ENCODE measurements at regions of chr12 and their contacts with region 1.

Region 1: DNA sequence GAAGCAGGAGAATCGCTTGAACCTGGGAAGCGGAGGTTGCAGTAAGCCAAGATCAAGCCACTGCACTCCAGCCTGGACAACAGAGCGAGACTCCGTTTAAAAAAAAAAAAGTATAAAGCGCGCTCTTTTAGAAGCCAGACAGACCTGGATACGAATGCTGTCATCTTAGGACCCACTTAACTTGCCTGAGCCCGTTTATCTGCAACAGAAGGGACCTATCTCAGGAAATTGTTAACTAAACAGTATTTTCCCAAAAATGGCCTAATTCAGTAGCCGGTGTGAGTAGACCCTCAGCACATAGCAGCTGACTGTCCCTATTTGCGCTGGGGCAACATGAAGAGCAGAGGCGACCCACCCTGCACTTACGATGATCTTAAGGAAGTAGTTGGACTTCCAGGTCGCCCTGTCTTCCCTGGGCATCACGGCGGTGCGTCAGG is 529 bp downstream of the RPLP0 start:
- DNase-seq: peak in 1 of 14 experiments; percentile 50
- ATAC-seq: no peak
- H3K4me3 ChIP-seq: peak overlapping the region; percentile 94
- H3K4me3 Mint-ChIP-seq: peak overlapping the region; percentile 99
- H3K27ac ChIP-seq: peak overlapping the region; percentile 67 to 74
- H3K27ac Mint-ChIP-seq: peak overlapping the region; percentile 91
- H3K4me1 ChIP-seq: peaks cover 46% of the 10 kb centered on the region
- H3K4me1 Mint-ChIP-seq: peaks cover 47% of the 10 kb centered on the region
- H3K27me3 ChIP-seq: no peaks in the 10 kb centered on the region
- H3K27me3 Mint-ChIP-seq: no peaks in the 10 kb centered on the region
- CTCF ChIP-seq: no peak

Region 2: GRCh38 chr12:120110550-120111501 is 89.6 kb before region 1 on chr12:
- CTCF ChIA-PET with region 1: no interaction called
- POLR2A ChIA-PET with region 1: interaction called, 51 read pairs
- intact Hi-C with region 1: loop called in 1 of 2 experiments (anchors 5 kb)
- DNase-seq: peak; percentile 23 to 76 (median 46)
- ATAC-seq: peak; percentile 82
- H3K4me3 ChIP-seq: peak overlapping the region; percentile 29
- H3K4me3 Mint-ChIP-seq: peak overlapping the region; percentile 74
- H3K27ac ChIP-seq: peak overlapping the region; percentile 21 to 26
- H3K27ac Mint-ChIP-seq: peak overlapping the region; percentile 75
- H3K4me1 ChIP-seq: peaks cover 71% of the 10 kb centered on the region
- H3K4me1 Mint-ChIP-seq: peaks cover 72% of the 10 kb centered on the region
- H3K27me3 ChIP-seq: no peaks in the 10 kb centered on the region
- H3K27me3 Mint-ChIP-seq: no peaks in the 10 kb centered on the region
- CTCF ChIP-seq: no peak

Region 3: DNA sequence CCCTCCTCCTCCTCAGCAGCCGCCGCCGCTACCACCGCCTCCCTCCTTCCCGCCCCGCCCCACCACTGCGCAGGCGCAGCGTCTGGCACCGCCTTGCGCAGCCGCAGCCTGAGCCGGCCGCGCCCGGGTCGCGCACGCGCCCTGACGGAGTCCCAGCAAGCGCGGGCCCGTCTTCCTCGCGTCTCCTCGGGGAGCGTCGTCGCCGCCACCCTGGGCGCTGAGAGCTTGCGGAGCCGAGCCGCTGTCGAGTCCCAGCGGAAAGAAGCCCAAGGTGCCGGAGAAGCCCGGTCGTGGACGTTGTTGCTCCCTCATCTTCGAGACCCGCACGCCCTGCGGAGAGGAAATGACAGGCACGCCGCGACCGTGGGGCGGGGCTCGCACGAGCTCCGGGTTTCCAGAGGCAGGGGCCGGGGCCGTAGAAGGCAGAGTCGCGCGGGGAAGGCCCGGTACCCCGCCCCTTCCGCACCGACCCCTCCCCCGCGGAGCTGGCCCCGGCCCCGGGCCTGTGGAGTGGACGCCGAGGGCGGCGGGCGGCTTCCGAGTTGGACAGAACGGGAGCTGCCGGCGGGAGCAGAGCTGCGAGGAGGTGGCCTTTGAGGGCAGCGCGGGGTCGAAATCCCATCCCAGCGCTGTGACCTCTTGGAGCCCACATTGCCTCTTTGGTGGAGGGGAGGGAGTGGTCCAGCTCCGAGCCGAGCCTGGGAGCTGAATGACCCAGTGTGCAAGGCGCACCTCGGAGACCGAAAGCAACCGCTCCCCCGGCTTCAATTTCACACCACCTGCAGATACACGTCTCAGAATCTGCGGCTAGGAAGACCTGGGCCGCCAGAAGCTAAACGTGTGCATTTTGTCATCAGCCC is 83.4 kb before region 1 on chr12:
- CTCF ChIA-PET with region 1: interaction called, 4 read pairs
- POLR2A ChIA-PET with region 1: interaction called, 51 read pairs
- intact Hi-C with region 1: loop called in 1 of 2 experiments (anchors 5 kb)
- DNase-seq: peak; percentile 96 to 99 (median 98)
- ATAC-seq: peak; percentile 75
- H3K4me3 ChIP-seq: peak overlapping the region; percentile 86
- H3K4me3 Mint-ChIP-seq: peak overlapping the region; percentile 91
- H3K27ac ChIP-seq: peak overlapping the region; percentile 94 to 95
- H3K27ac Mint-ChIP-seq: peak overlapping the region; percentile 84
- H3K4me1 ChIP-seq: peaks cover 61% of the 10 kb centered on the region
- H3K4me1 Mint-ChIP-seq: peaks cover 76% of the 10 kb centered on the region
- H3K27me3 ChIP-seq: no peaks in the 10 kb centered on the region
- H3K27me3 Mint-ChIP-seq: no peaks in the 10 kb centered on the region
- CTCF ChIP-seq: no peak

Region 4: DNA sequence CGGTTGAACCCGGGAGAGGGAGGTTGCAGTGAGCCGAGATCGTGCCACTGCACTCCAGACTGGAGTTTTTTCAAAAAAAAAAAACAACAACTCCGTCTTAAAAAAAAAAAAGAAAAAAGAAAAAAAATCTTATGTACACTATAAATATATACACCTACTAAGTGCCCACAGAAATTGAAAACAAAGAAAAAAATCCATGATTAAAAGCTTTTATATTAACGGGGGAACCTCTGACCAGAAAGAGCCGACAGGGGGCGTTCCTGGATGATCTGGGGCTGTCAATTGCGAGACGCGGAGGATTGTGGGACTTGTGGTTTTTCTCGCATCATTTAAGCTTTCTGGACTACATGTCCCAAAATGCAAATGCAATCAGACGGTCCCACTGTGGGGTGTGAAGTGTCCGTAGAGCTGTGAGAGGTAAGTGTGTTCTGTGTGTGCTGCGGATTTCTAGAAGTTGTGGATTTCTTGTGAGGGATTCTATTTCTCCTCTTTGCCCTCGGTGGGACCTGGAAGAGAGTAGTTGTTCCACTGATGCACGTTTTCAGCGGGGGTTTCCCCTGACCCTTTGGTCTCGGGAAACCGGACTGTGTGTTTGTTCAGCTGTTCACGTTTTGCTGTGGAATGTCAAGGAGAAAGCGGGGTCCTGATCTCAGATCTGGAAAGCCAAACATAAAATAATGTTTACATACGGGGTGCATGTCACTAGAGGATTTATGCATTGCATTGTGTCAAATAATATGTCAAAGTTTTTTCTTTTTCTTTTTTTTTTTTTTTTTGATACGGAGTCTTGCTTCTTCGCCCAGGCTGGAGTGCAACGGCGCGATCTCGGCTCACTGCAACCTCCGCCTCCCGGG is 101.8 kb after region 1 on chr12 and contains the start of gene SIRT4:
- CTCF ChIA-PET with region 1: interaction called, 11 read pairs
- POLR2A ChIA-PET with region 1: interaction called, 21 read pairs
- intact Hi-C with region 1: no loop called
- DNase-seq: peak; percentile 77 to 96 (median 86)
- ATAC-seq: peak; percentile 99
- H3K4me3 ChIP-seq: peak within 1 kb of the TSS; percentile 97
- H3K4me3 Mint-ChIP-seq: peak within 1 kb of the TSS; percentile 97
- H3K27ac ChIP-seq: peak within 1 kb of the TSS in 1 of 2 donors; percentile 60
- H3K27ac Mint-ChIP-seq: peak within 1 kb of the TSS; percentile 79
- H3K4me1 ChIP-seq: peaks cover 13% of the 10 kb centered on the region
- H3K4me1 Mint-ChIP-seq: peaks cover 11% of the 10 kb centered on the region
- H3K27me3 ChIP-seq: no peaks in the 10 kb centered on the region
- H3K27me3 Mint-ChIP-seq: no peaks in the 10 kb centered on the region
- CTCF ChIP-seq: peak; percentile 78
- total RNA-seq, gene SIRT4: 0.59 TPM in 1 of 2 experiments, not detected in the other

Region 5: DNA sequence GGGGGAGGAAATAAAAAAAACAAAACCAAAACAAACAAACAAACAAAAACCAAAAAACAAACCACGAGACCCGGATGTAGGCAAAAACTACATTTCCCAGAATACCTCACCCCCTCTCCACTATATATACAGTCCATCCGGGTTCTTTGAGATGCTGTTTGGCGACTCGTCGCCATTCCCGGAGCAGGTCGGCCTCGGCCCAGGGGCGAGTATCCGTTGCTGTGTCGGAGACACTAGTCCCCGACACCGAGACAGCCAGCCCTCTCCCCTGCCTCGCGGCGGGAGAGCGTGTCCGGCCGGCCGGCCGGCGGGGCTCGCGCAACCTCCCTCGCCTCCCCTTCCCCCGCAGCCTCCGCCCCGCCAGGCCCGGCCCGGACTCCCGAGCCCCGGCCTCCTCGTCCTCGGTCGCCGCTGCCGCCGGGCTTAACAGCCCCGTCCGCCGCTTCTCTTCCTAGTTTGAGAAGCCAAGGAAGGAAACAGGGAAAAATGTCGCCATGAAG is 333.9 kb after region 1 on chr12 and contains the start of gene RNF10:
- CTCF ChIA-PET with region 1: no interaction called
- POLR2A ChIA-PET with region 1: interaction called, 13 read pairs
- intact Hi-C with region 1: no loop called
- DNase-seq: peak; percentile 53 to 92 (median 68)
- ATAC-seq: peak; percentile 65
- H3K4me3 ChIP-seq: peak within 1 kb of the TSS; percentile 92
- H3K4me3 Mint-ChIP-seq: peak within 1 kb of the TSS; percentile 91
- H3K27ac ChIP-seq: peak within 1 kb of the TSS; percentile 66 to 89
- H3K27ac Mint-ChIP-seq: peak within 1 kb of the TSS; percentile 91
- H3K4me1 ChIP-seq: peaks cover 49% of the 10 kb centered on the region
- H3K4me1 Mint-ChIP-seq: peaks cover 62% of the 10 kb centered on the region
- H3K27me3 ChIP-seq: no peaks in the 10 kb centered on the region
- H3K27me3 Mint-ChIP-seq: no peaks in the 10 kb centered on the region
- CTCF ChIP-seq: no peak
- total RNA-seq, gene RNF10: 441 to 446 TPM

Measured in CD4-positive, alpha-beta T cell (primary cell).